ENCODE measurements at regions of chr6 and their contacts with region 1.

Region 1: GRCh38 chr6:149028767-149029405 is 282.1 kb downstream of the UST start:
- DNase-seq: no peak
- H3K4me3 ChIP-seq: no peak overlapping the region
- H3K27ac ChIP-seq: no peak overlapping the region
- H3K4me1 ChIP-seq: peaks cover 3 to 20% of the 10 kb centered on the region in 2 donors
- H3K27me3 ChIP-seq: no peaks in the 10 kb centered on the region
- CTCF ChIP-seq: peak; percentile 64 to 77 (median 67)

Region 2: GRCh38 chr6:148578245-148578732 is 450.6 kb before region 1 on chr6:
- intact Hi-C with region 1: loop called (anchors 1 kb)
- DNase-seq: peak in 1 of 2 donors; percentile 89
- H3K4me3 ChIP-seq: no peak overlapping the region
- H3K27ac ChIP-seq: no peak overlapping the region
- H3K4me1 ChIP-seq: peaks cover 0 to 6% of the 10 kb centered on the region in 2 donors
- H3K27me3 ChIP-seq: no peaks in the 10 kb centered on the region
- CTCF ChIP-seq: peak; percentile 83 to 95 (median 87)

Region 3: GRCh38 chr6:149082286-149082707 is 53.4 kb after region 1 on chr6:
- intact Hi-C with region 1: loop called (anchors 2 kb)
- DNase-seq: peak in 1 of 2 donors; percentile 87
- H3K4me3 ChIP-seq: no peak overlapping the region
- H3K27ac ChIP-seq: no peak overlapping the region
- H3K4me1 ChIP-seq: peaks cover 4 to 31% of the 10 kb centered on the region in 2 donors
- H3K27me3 ChIP-seq: no peaks in the 10 kb centered on the region
- CTCF ChIP-seq: peak; percentile 54 to 75 (median 65)

Region 4: DNA sequence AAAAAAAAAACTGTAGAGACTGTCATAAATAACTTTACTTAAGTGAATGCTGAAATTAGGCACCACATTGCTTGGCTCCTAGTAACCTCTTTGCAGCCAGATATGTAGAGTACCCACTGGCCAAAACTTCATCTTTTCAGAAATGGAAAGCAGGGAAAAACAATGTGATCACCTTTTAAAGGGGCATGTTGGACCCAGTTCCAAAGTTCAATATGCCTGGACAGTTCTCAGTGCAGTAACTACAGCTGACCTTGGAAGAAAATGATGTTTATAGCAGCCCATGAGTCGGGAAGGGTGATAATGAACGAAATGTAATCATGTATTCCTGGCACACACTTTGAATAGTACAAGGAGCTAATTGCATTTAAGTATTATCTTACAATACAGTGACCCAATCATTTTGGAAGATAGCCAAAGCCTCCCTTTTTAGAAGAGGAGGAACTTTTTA is 195.0 kb after region 1 on chr6:
- intact Hi-C with region 1: no loop called
- DNase-seq: no peak
- H3K4me3 ChIP-seq: no peak overlapping the region
- H3K27ac ChIP-seq: no peak overlapping the region
- H3K4me1 ChIP-seq: peaks cover 0 to 3% of the 10 kb centered on the region in 2 donors
- H3K27me3 ChIP-seq: no peaks in the 10 kb centered on the region
- CTCF ChIP-seq: no peak

Region 5: GRCh38 chr6:149316798-149317655 is 288.1 kb after region 1 on chr6:
- intact Hi-C with region 1: loop called (anchors 5 kb)
- DNase-seq: peak; percentile 70 to 95
- H3K4me3 ChIP-seq: peak overlapping the region; percentile 72 to 86
- H3K27ac ChIP-seq: peak overlapping the region; percentile 95 to 99
- H3K4me1 ChIP-seq: peaks cover 0 to 5% of the 10 kb centered on the region in 2 donors
- H3K27me3 ChIP-seq: no peaks in the 10 kb centered on the region
- CTCF ChIP-seq: no peak

Region 6: DNA sequence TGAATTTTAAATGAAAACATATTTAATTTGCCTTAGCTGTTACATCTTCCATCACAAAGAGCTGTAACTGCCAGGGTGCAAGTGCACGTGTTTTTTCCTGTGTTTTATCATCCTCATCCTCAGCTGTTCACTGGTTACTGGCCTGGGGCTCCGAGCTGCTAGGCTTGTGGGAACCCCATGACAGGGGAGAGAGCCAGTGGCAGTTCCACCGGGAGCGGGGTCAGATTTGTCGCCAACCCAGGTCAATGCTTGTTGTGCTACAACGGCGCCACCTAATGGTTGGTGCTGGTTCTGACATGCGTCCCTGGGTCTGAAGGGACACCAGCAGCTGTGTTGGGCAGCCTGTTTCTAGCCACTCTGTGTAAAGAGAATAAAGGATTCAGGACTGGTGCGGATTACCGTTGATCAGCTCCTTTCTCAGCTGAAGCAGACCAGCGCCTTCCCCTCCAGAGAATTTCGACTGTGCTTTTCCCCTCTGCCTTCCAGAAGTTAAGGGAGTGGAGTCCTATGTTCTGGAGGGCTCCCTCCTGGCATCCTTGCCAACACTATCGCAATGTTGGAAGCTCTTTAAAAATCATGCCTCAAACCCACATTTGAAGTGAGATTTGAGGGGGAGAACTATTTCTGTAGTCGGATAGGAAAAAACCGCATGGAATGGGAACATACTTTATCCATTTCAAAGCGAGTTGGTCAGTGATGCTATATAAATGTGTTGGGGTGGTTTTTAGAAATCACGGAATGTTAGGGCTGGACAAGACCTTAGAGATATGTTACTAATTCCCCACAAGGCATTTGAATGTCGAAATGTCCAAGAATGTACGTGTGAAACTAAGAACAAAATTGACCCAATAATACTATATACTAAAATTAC is 403.3 kb after region 1 on chr6:
- intact Hi-C with region 1: loop called (anchors 1 kb)
- DNase-seq: peak; percentile 67 to 95
- H3K4me3 ChIP-seq: no peak overlapping the region
- H3K27ac ChIP-seq: no peak overlapping the region
- H3K4me1 ChIP-seq: peaks cover 0 to 4% of the 10 kb centered on the region in 2 donors
- H3K27me3 ChIP-seq: no peaks in the 10 kb centered on the region
- CTCF ChIP-seq: peak; percentile 92 to 96 (median 94)

Region 7: GRCh38 chr6:149513915-149514314 is 485.0 kb after region 1 on chr6:
- intact Hi-C with region 1: loop called (anchors 2 kb)
- DNase-seq: no peak
- H3K4me3 ChIP-seq: no peak overlapping the region
- H3K27ac ChIP-seq: no peak overlapping the region
- H3K4me1 ChIP-seq: no peaks in the 10 kb centered on the region
- H3K27me3 ChIP-seq: no peaks in the 10 kb centered on the region
- CTCF ChIP-seq: no peak

Region 8: DNA sequence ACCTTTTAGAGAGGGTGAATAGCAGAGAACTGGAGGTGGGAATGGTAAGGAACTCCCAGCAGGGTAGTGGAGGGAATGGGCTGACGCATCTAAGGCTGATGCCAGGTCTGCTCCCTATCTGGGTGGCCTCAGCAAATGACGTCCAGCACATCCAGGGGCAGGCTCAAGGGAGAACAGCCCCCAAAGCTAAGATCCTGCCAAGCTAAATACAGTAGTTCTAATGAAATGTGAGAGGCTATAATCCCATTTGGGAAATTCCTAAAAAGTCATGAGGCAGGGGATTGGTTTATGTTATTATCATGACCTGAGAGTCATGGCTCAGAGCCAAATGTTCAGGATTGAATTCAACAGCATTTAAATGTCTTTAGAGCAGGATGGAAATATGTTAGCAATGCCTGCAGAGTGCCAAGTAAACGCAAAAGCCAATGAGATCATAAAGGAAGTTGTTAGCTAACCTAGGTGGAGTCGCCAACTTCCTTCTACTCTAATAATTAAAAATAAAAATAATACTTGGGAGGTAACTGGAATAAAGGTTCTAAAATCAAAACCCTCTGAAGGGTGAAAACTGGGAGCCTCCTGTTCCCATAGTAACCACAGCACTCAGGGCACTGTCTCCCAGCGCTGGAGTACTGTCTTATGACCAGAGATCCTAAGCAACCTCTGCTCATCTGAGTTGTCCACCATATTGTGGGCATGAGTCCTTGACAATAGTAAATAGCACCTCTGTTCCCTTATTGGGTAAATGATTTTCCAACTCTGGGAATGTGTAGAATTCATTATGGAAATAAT is 1374.8 kb after region 1 on chr6:
- intact Hi-C with region 1: no loop called
- DNase-seq: peak in 1 of 2 donors; percentile 83
- H3K4me3 ChIP-seq: no peak overlapping the region
- H3K27ac ChIP-seq: peak overlapping the region; percentile 5 to 19
- H3K4me1 ChIP-seq: peaks cover 7 to 10% of the 10 kb centered on the region in 2 donors
- H3K27me3 ChIP-seq: no peaks in the 10 kb centered on the region
- CTCF ChIP-seq: no peak